GM13977 (cell line): ENCODE measurements at regions of chr9 and their contacts with region 1.

Region 1: GRCh38 chr9:70484210-70485130 is 70.0 kb upstream of the KLF9 start:
- DNase-seq: peak; percentile 66
- CTCF ChIP-seq: peak; percentile 64

Region 2: DNA sequence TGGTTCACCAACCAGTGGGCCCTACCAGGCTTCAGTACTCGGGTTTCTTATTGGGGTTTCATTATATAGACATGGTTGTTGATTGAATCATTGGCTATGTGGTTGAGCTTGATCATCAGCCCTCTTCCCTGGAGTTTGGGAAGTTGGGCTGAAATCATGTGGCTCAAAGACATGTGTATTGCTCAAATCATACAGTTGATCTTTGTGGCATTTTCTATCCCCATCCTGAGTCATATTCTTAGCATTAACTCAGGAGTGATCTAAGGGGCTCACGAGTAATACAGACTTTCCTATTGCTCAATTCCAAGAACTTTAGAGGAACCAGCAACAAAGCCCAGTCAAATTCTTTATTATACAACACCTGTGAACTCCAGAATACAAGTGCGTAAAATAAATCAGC is 159.5 kb before region 1 on chr9:
- in situ Hi-C with region 1: no loop called
- DNase-seq: no peak
- CTCF ChIP-seq: no peak

Region 3: DNA sequence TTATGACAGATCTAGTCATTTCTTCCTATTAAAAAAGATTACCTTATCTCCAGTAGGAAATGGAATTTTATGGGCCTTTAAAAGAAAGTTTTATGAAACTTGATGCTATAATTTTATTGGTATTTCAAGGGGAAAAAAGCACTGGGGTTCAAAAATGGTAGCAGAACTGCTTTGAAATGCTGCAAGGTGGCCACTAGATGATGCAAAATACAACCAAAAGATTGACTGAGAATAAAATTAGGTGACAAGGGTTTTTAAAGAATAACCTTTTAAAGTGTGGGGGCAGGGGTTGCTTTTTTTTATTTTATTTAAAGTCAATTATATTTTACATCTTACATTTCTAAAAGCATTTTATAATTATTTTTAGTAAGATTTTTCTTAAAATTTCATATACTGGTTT is 131.7 kb before region 1 on chr9:
- in situ Hi-C with region 1: loop called (anchors 10 kb)
- DNase-seq: no peak
- CTCF ChIP-seq: peak; percentile 38